ENCODE measurements at regions of chr4 and their contacts with region 1.

Region 1: GRCh38 chr4:15677507-15677988 is 4.1 kb upstream of the FAM200B start:
- DNase-seq: no peak
- CTCF ChIP-seq: no peak

Region 2: GRCh38 chr4:15506464-15506863 is 171.1 kb before region 1 on chr4:
- CTCF ChIA-PET with region 1: no interaction called
- POLR2A ChIA-PET with region 1: no interaction called
- DNase-seq: no peak
- CTCF ChIP-seq: no peak

Region 3: DNA sequence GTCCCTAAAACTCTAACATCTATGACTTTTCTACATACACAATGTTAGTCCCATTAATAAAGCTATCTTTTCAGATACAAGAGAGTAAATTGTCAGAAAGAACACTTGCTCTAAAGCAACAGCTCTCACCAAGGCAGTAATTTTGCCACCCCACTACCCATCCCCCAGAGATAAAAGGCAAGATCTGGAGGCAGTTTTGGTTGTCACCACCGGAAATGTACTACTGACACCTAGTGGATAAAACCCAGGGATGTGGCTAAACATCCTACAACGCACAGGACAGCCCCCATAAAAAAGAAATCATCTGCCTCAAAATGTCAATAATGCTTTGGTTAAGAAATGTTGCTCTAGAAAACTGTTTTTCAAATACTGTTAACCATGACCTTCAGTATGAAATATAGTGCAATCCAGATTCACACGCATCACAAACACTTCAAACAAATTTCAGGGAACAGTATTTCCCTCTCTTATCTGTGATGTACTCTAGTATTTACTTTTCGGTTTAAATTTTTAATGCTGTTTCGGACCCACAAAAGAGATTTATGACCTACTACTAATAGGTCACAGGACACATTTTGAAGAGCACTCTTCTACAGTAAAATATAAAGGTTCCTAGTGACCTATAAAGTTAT is 27.5 kb before region 1 on chr4:
- CTCF ChIA-PET with region 1: interaction called, 10 read pairs
- POLR2A ChIA-PET with region 1: no interaction called
- DNase-seq: peak; percentile 27
- CTCF ChIP-seq: peak; percentile 69

Region 4: GRCh38 chr4:15665753-15666365 is 11.7 kb before region 1 on chr4:
- CTCF ChIA-PET with region 1: interaction called, 10 read pairs
- POLR2A ChIA-PET with region 1: interaction called, 4 read pairs
- DNase-seq: no peak
- CTCF ChIP-seq: no peak

Region 5: DNA sequence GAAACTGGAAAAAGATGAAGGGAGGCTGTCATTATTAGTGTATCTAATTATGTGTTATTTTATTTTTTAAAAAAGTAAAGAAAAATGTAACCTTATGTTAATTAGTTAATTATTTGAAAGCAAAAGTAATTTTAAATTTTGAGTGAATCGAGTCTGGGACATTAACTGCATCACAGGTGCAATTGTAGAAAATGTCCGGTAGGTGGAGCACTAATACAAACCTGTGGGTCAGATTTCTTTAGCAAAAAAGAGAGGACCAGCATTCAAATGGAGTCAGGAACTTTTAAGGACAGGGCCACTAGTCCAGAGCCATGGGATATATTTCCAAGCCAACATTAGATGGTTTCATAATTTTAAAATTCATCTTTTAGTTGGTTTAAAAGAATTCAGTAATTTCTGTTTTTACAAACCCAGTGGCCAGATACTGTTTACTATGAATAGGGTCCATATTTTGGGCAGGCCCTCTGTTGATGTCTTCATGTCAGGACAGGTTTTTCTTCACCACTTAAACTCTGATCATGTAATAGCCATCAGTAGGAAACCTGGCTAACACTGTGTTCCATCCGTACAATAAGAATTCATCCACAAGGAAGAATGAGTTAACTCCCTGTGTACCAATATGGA is 52.5 kb after region 1 on chr4:
- CTCF ChIA-PET with region 1: no interaction called
- POLR2A ChIA-PET with region 1: no interaction called
- DNase-seq: peak; percentile 64
- CTCF ChIP-seq: peak; percentile 71

Region 6: DNA sequence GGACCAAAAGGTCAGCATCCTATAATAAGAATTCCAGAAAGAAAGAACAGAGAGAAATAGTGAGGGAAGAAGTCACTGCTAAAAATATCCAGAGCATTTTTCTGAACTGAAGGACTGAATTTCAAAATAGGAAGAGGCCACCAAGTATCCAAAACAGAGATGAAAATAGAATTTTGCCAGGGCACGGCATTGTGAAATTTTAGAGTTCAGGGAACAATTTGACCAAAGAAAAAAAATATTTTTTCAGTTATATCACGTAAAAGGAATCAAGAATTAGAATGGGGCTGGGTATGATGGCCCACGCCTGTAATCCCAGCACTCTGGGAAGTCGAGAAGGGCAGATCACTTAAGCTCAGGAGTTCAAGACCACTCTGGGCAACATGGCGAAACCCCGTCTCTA is 195.6 kb after region 1 on chr4:
- CTCF ChIA-PET with region 1: no interaction called
- POLR2A ChIA-PET with region 1: no interaction called
- DNase-seq: no peak
- CTCF ChIP-seq: no peak